Endothelial cell of umbilical vein (primary cell): ENCODE measurements at regions of chr17 and their contacts with region 1.

Region 1: DNA sequence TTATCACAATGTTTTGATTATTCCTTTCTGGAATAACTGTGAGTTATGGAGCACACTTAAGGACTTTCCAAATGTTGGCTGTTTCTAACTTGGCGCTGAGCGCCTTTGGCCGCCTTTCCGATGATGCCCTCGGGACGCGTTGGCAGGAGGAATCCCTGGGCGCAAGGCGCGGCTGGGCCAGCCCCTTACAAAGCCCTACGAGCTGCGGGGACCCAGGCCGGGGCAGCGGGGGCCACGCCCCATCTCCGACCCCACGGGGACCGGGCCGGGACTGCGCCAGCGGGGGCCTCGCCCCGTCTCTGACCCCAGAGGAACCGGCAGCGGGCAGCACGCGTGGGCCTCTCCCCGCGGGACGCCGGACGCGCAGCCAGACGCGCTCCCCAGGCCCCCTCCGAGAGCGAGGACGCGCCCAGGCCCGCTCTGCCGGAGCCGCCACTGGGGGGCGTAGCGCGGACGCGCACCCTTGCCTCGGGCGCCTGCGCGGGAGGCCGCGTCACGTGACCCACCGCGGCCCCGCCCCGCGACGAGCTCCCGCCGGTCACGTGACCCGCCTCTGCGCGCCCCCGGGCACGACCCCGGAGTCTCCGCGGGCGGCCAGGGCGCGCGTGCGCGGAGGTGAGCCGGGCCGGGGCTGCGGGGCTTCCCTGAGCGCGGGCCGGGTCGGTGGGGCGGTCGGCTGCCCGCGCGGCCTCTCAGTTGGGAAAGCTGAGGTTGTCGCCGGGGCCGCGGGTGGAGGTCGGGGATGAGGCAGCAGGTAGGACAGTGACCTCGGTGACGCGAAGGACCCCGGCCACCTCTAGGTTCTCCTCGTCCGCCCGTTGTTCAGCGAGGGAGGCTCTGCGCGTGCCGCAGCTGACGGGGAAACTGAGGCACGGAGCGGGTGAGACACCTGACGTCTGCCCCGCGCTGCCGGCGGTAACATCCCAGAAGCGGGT is at the start of gene GAA:
- DNase-seq: peak; percentile 83
- H3K4me3 ChIP-seq: peak within 1 kb of the TSS; percentile 70 to 80 (median 72)
- H3K27ac ChIP-seq: peak within 1 kb of the TSS; percentile 32
- H3K4me1 ChIP-seq: peaks cover 10% of the 10 kb centered on the region
- H3K27me3 ChIP-seq: no peaks in the 10 kb centered on the region
- CTCF ChIP-seq: peak; percentile 74 to 94
- POLR2A ChIP-seq: peak; percentile 82
- total RNA-seq, gene GAA: 45.9 and 49.7 TPM in 2 replicates

Region 2: GRCh38 chr17:80071116-80071980 is 29.9 kb before region 1 on chr17:
- CTCF ChIA-PET with region 1: interaction called, 11 read pairs
- POLR2A ChIA-PET with region 1: no interaction called
- dilution Hi-C with region 1: no loop called
- intact Hi-C with region 1: no loop called
- DNase-seq: peak; percentile 82
- H3K4me3 ChIP-seq: peak overlapping the region; percentile 7 to 54 (median 26)
- H3K27ac ChIP-seq: peak overlapping the region; percentile 67
- H3K4me1 ChIP-seq: peaks cover 29% of the 10 kb centered on the region
- H3K27me3 ChIP-seq: no peaks in the 10 kb centered on the region
- CTCF ChIP-seq: no peak
- POLR2A ChIP-seq: peak; percentile 69

Region 3: GRCh38 chr17:80087346-80088265 is 13.7 kb before region 1 on chr17:
- CTCF ChIA-PET with region 1: interaction called, 23 read pairs
- POLR2A ChIA-PET with region 1: no interaction called
- dilution Hi-C with region 1: no loop called
- intact Hi-C with region 1: no loop called
- DNase-seq: no peak
- H3K4me3 ChIP-seq: no peak overlapping the region
- H3K27ac ChIP-seq: no peak overlapping the region
- H3K4me1 ChIP-seq: no peaks in the 10 kb centered on the region
- H3K27me3 ChIP-seq: no peaks in the 10 kb centered on the region
- CTCF ChIP-seq: no peak
- POLR2A ChIP-seq: no peak

Region 4: DNA sequence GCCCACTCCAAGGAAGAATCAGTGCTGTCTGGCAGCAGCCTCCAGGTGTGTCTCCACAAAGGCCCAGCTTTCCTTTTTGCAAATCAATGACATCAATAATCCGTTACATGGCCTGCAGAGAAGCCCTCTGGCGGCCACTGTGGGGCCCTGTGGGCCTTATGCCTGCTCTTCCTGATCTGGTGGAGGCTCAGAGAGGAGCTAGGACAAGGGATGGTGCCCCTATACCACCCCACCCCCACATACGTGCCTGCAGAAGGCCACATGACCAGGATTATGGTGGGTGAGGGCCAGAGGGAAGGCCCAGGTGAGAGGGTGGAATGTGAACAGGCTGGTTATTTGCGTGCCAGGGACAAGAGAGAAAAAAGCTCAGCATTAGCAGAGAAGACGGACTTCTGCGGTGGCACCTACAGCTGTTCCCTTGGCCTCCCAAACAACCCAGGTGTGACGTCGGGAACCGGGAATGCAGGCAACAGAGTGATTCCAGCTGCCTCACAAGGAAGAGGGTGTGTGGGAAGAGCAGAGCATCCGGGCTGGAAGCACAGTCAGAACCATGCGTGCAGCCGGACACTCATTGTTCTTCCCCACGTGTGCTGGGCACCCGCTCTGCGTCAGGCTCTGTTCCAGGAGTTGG is 23.2 kb after region 1 on chr17:
- CTCF ChIA-PET with region 1: interaction called, 21 read pairs
- POLR2A ChIA-PET with region 1: no interaction called
- dilution Hi-C with region 1: no loop called
- intact Hi-C with region 1: no loop called
- DNase-seq: peak; percentile 23
- H3K4me3 ChIP-seq: no peak overlapping the region
- H3K27ac ChIP-seq: no peak overlapping the region
- H3K4me1 ChIP-seq: no peaks in the 10 kb centered on the region
- H3K27me3 ChIP-seq: peaks cover 18 to 19% of the 10 kb centered on the region in 2 experiments
- CTCF ChIP-seq: peak; percentile 25 to 66
- POLR2A ChIP-seq: no peak

Region 5: DNA sequence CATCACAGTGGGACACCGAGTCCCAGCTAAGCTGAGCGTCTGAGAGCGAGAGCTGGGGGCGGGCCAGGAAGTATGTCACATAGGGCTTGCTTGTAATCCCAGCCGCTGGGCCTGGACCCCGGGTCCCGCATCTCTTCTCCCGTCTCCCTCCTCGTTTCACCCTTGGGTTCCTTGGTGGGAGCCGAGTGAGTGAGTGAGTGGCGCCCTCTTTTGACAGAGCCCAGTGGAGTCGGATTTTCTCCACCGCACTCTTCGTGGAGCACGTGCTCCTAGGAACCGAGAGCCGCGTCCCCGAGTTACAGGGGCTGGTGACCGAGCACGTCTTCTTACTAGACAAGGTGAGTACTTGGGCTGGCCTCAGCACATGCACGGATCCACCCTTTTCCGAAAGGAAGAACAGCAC is 262.9 kb after region 1 on chr17:
- CTCF ChIA-PET with region 1: interaction called, 6 read pairs
- POLR2A ChIA-PET with region 1: no interaction called
- dilution Hi-C with region 1: no loop called
- intact Hi-C with region 1: loop called (anchors 10 kb)
- DNase-seq: no peak
- H3K4me3 ChIP-seq: no peak overlapping the region
- H3K27ac ChIP-seq: no peak overlapping the region
- H3K4me1 ChIP-seq: no peaks in the 10 kb centered on the region
- H3K27me3 ChIP-seq: no peaks in the 10 kb centered on the region
- CTCF ChIP-seq: peak; percentile 24 to 43
- POLR2A ChIP-seq: no peak

Region 6: DNA sequence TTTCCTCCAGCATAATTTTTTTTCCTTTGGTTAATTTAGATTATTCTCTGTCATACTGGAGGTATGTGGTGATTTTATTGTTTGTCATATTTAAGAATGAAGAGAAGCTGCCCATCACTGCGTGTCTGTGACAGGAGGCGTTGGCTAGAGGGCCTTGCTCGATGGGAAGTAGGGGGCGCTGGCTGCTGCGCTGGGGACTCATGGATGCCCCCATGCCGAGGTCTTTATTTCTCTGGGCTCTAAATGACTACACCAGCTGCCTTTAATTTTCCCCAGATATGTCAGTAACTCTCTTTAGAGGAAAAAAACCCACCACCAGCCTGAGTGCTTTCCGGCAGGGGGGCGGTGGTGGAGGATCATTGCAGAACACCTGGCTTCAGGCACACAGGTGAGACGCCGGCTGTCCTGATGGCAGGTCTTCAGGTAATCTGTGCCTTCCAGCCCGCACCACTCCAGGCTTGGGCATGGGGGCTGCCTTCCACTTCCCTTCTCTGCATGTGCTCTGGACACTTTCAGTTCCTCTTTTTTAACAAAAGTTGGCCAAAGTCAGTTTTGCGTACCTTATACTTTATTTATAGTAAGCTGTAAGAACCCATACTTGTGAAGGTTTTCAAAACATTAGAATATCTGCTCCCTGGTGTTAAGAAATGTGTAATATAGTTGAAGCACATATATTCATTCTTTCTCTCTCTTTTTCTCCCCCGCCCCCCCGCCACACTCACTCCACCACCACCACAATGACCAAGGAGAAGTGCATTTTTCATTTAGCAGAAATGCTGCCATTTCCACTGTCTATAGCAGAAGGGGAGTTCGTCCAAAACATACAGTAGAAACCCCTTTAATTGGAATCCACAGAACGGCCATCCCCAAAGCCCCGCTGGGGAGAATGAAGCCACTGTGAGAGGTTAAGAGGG is 636.1 kb after region 1 on chr17:
- CTCF ChIA-PET with region 1: no interaction called
- POLR2A ChIA-PET with region 1: no interaction called
- dilution Hi-C with region 1: no loop called
- intact Hi-C with region 1: no loop called
- DNase-seq: no peak
- H3K4me3 ChIP-seq: no peak overlapping the region
- H3K27ac ChIP-seq: no peak overlapping the region
- H3K4me1 ChIP-seq: no peaks in the 10 kb centered on the region
- H3K27me3 ChIP-seq: no peaks in the 10 kb centered on the region
- CTCF ChIP-seq: no peak
- POLR2A ChIP-seq: no peak